Endothelial cell of umbilical vein (primary cell): ENCODE measurements at regions of chr16 and their contacts with region 1.

Region 1: GRCh38 chr16:19502395-19503131 is 19.3 kb downstream of the GDE1 start:
- DNase-seq: peak; percentile 73
- H3K4me3 ChIP-seq: no peak overlapping the region
- H3K27ac ChIP-seq: no peak overlapping the region
- H3K4me1 ChIP-seq: peaks cover 7% of the 10 kb centered on the region
- H3K27me3 ChIP-seq: no peaks in the 10 kb centered on the region
- CTCF ChIP-seq: peak; percentile 71 to 77
- POLR2A ChIP-seq: no peak

Region 2: DNA sequence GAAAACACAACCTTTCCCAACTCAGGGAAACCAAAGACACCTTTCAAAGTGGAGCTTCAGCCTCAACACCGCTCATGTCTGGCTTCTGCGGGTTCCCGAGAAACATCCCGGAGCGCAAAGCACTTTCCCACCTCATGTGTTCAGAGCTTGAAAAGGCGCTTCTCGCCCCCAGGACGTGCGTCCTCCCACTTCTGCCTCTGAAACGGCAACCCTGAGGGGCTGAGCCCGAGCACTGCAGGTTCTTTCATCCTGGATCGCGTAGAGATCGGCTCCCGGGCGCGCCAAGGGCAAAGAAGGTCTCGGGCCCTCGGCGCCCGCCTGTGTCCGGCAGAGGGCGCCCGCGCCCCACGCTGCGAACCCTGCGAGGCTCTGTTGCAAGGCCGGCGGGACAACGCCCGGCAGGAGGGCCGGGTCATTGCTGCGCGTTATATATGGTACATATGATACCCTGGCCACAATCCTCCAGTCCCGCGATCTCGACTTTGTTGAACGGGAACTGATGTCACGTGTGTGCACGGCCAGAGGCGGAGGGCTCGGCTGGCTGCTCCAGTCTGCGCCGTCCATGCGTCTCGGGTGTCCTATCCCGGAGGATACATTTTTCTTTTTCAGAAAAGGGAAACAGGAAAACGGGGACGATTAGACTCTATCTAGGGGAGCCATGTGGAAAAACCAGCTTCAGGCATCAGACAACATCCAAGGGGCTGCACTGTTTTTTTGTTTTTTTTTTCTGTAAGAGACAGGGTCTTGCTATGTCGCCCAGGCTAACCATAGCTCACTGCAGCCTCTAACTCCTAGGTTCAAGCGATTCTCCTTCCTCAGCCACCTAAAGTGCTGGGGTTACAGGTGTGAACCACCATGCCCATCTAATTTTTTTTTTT is 416.0 kb before region 1 on chr16:
- CTCF ChIA-PET with region 1: interaction called, 44 read pairs
- POLR2A ChIA-PET with region 1: interaction called, 5 read pairs
- dilution Hi-C with region 1: no loop called
- intact Hi-C with region 1: loop called (anchors 1 kb)
- DNase-seq: peak; percentile 95
- H3K4me3 ChIP-seq: peak overlapping the region; percentile 34 to 69 (median 41)
- H3K27ac ChIP-seq: peak overlapping the region; percentile 61
- H3K4me1 ChIP-seq: peaks cover 15% of the 10 kb centered on the region
- H3K27me3 ChIP-seq: no peaks in the 10 kb centered on the region
- CTCF ChIP-seq: peak; percentile 99
- POLR2A ChIP-seq: peak; percentile 94

Region 3: GRCh38 chr16:19179546-19180490 is 322.7 kb before region 1 on chr16:
- CTCF ChIA-PET with region 1: interaction called, 18 read pairs
- POLR2A ChIA-PET with region 1: no interaction called
- dilution Hi-C with region 1: no loop called
- intact Hi-C with region 1: no loop called
- DNase-seq: peak; percentile 63
- H3K4me3 ChIP-seq: no peak overlapping the region
- H3K27ac ChIP-seq: no peak overlapping the region
- H3K4me1 ChIP-seq: peaks cover 2% of the 10 kb centered on the region
- H3K27me3 ChIP-seq: peaks cover 0 to 6% of the 10 kb centered on the region in 2 experiments
- CTCF ChIP-seq: peak; percentile 73 to 87
- POLR2A ChIP-seq: no peak

Region 4: DNA sequence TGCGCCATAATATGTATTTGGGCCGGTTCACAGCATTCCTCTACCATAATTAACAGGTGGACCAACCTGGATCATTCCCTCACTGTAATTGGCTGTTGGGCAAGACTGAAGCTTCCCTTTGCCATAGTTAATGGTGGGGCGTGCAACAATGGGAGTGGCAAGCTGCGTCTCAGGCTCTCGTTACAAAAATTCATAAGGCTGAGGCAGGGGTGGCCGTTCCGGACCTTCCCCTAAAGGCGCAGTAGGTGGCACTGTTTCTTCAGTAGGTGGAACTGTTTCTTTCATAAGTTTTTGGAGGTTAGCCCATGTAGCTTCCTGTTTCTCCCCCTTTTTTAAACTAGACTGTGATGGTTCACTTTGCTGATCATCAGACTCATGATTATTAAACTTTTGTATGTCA is 101.9 kb before region 1 on chr16:
- CTCF ChIA-PET with region 1: interaction called, 5 read pairs
- POLR2A ChIA-PET with region 1: no interaction called
- dilution Hi-C with region 1: no loop called
- intact Hi-C with region 1: loop called (anchors 5 kb)
- DNase-seq: no peak
- H3K4me3 ChIP-seq: no peak overlapping the region
- H3K27ac ChIP-seq: no peak overlapping the region
- H3K4me1 ChIP-seq: no peaks in the 10 kb centered on the region
- H3K27me3 ChIP-seq: no peaks in the 10 kb centered on the region
- CTCF ChIP-seq: no peak
- POLR2A ChIP-seq: no peak

Region 5: GRCh38 chr16:19513377-19514053 is 11.0 kb after region 1 on chr16:
- CTCF ChIA-PET with region 1: interaction called, 28 read pairs
- POLR2A ChIA-PET with region 1: no interaction called
- dilution Hi-C with region 1: no loop called
- intact Hi-C with region 1: no loop called
- DNase-seq: no peak
- H3K4me3 ChIP-seq: no peak overlapping the region
- H3K27ac ChIP-seq: no peak overlapping the region
- H3K4me1 ChIP-seq: no peaks in the 10 kb centered on the region
- H3K27me3 ChIP-seq: no peaks in the 10 kb centered on the region
- CTCF ChIP-seq: no peak
- POLR2A ChIP-seq: no peak

Region 6: DNA sequence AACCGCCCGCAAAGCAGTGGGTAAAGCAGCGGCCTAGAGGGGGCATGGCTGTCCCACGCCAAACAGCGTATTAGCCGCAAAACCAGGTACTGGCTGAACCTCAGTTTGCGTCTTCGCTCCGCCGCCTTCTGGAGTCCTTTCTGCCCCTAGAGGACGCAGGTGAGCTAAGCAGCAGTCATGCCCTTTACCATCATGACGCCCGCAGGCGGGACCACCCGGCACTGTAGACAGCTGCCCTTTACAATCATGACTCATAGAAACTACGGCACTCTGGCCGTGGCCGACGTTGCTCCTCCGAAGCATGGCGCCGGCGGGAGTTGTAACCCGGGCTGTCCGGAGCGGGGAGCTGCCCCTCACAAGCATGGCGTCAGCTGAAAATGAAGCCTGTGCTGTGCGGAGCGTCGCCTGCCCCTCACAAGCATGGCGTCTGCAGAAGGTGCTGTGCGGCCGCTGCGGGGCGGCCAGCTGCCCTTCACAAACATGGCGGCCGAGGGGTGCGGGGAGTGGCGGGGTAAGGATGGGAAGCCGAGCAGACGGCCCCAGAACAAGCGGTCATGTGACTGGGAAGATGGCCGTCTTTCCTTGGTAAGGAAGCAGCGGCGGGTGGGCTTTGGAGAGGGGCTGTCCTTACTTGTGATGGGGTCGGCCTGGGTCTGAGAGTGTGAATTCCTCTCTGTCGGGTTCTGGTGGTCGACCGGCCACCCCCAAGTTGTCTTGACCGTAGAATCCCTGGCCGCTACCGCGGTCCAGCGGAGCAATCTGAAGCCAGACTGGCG is 52.8 kb after region 1 on chr16 and contains the start of gene VPS35L:
- CTCF ChIA-PET with region 1: interaction called, 12 read pairs
- POLR2A ChIA-PET with region 1: no interaction called
- dilution Hi-C with region 1: no loop called
- intact Hi-C with region 1: no loop called
- DNase-seq: peak; percentile 100
- H3K4me3 ChIP-seq: peak within 1 kb of the TSS; percentile 67 to 77 (median 68)
- H3K27ac ChIP-seq: peak within 1 kb of the TSS; percentile 85
- H3K4me1 ChIP-seq: peaks cover 6% of the 10 kb centered on the region
- H3K27me3 ChIP-seq: no peaks in the 10 kb centered on the region
- CTCF ChIP-seq: peak; percentile 60 to 88
- POLR2A ChIP-seq: peak; percentile 90
- total RNA-seq, gene VPS35L: 80.2 and 91.1 TPM in 2 replicates